ENCODE measurements at regions of chr22 and their contacts with region 1.

Region 1: GRCh38 chr22:41800348-41801146 is at the start of gene CCDC134:
- DNase-seq: peak; percentile 75
- H3K4me3 ChIP-seq: peak within 1 kb of the TSS; percentile 89 to 100 (median 93)
- H3K27ac ChIP-seq: peak within 1 kb of the TSS; percentile 69
- H3K4me1 ChIP-seq: peaks cover 21% of the 10 kb centered on the region
- H3K27me3 ChIP-seq: no peaks in the 10 kb centered on the region
- CTCF ChIP-seq: no peak
- total RNA-seq, gene CCDC134: 9.4 to 10.5 TPM

Region 2: GRCh38 chr22:41666661-41667258 is 133.8 kb before region 1 on chr22:
- CTCF ChIA-PET with region 1: no interaction called
- dilution Hi-C with region 1: no loop called
- in situ Hi-C with region 1: no loop called
- intact Hi-C with region 1: loop called (anchors 1 kb)
- DNase-seq: peak; percentile 85
- H3K4me3 ChIP-seq: peak overlapping the region; percentile 2 to 45 (median 21)
- H3K27ac ChIP-seq: peak overlapping the region; percentile 91
- H3K4me1 ChIP-seq: peaks cover 16% of the 10 kb centered on the region
- H3K27me3 ChIP-seq: no peaks in the 10 kb centered on the region
- CTCF ChIP-seq: peak; percentile 94 to 100

Region 3: GRCh38 chr22:41697126-41697775 is 103.3 kb before region 1 on chr22:
- CTCF ChIA-PET with region 1: interaction called, 3 read pairs
- dilution Hi-C with region 1: no loop called
- in situ Hi-C with region 1: loop called in 1 of 2 experiments (anchors 10 kb)
- intact Hi-C with region 1: loop called (anchors 5 kb)
- DNase-seq: peak; percentile 64
- H3K4me3 ChIP-seq: peak overlapping the region in 1 of 3 experiments; percentile 28
- H3K27ac ChIP-seq: no peak overlapping the region
- H3K4me1 ChIP-seq: peaks cover 17% of the 10 kb centered on the region
- H3K27me3 ChIP-seq: no peaks in the 10 kb centered on the region
- CTCF ChIP-seq: peak; percentile 88 to 98

Region 4: GRCh38 chr22:41725510-41726110 is 74.9 kb before region 1 on chr22:
- CTCF ChIA-PET with region 1: no interaction called
- dilution Hi-C with region 1: loop called (anchors 5 kb)
- in situ Hi-C with region 1: no loop called
- intact Hi-C with region 1: no loop called
- DNase-seq: no peak
- H3K4me3 ChIP-seq: no peak overlapping the region
- H3K27ac ChIP-seq: no peak overlapping the region
- H3K4me1 ChIP-seq: no peaks in the 10 kb centered on the region
- H3K27me3 ChIP-seq: no peaks in the 10 kb centered on the region
- CTCF ChIP-seq: no peak

Region 5: DNA sequence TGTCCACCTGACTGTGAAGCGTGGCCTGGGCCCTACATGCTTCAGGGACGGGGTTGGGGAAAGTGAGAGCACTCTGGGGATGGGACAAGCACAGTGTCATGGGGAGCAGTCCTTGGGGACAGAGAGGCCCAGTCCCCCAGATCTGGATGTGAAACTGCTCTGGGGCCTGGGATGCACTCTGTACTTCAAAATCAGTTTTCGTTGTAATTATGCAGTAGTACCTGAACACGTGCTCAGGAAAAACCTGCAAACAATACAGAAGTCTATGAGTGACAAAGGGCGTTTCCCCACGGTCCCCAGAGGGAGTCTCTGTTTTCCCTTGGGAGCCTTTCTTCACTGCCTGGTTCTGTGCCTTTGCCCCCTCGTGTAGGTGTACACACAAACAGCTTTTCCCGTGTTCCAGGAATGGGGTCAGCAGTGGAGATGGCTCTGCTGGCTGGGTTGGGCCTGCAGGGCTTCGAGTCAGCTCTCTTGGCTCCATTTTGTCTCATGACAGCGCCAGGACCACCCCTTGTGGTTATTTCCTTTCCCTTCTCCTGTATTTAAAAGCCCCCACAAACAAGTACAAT is 131.2 kb after region 1 on chr22:
- CTCF ChIA-PET with region 1: no interaction called
- dilution Hi-C with region 1: loop called (anchors 5 kb)
- in situ Hi-C with region 1: no loop called
- intact Hi-C with region 1: no loop called
- DNase-seq: no peak
- H3K4me3 ChIP-seq: no peak overlapping the region
- H3K27ac ChIP-seq: no peak overlapping the region
- H3K4me1 ChIP-seq: no peaks in the 10 kb centered on the region
- H3K27me3 ChIP-seq: no peaks in the 10 kb centered on the region
- CTCF ChIP-seq: no peak